ENCODE measurements at regions of chr12 and their contacts with region 1.

Region 1: DNA sequence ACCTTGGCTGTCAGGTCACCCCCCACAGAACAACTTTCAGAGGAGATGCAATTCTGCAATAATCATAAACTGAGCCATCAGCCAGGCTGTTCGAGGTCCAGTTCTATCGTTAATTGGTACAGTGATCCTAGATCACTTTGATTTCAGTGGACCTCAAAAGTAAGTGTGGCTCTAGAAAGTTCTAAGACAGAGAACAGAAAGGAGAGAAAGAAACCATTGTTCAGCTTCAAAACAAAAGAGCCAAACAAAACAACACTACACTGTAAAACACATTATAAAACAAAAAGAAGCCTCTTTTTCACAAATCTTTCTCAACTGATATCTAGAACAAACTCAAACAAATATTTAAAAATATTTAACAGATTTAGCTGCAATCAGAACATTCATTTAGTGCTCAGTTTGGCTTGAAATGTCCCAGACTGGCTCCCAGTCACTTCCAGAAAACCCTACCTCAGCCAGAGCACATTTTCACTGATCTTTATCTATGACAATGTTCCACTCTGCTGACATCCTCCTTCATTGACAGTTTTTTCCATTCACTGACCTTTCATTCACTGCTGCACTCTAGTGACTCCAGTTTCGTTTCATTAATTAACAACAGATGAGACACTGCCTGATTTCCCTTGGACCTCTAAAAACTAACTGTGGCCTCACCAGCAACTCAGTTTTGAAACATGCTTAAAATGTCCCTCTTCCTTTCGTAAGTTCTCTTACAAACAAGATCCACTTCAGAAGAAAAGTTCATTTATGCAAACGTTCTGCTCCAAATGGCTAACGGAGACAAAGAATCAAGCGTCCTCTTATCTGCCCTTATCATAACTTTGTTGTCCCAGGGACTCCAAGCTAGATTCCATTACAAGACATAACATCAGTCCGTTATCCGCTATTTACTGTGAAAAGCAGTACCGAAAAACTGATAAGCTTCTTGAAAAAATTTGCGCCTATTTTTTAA is 56.8 kb downstream of the DUSP16 start:
- DNase-seq: no peak
- H3K4me3 ChIP-seq: no peak overlapping the region
- H3K27ac ChIP-seq: peak overlapping the region; percentile 52
- H3K4me1 ChIP-seq: no peaks in the 10 kb centered on the region
- H3K27me3 ChIP-seq: no peaks in the 10 kb centered on the region
- CTCF ChIP-seq: no peak

Region 2: GRCh38 chr12:12081836-12082497 is 423.9 kb before region 1 on chr12:
- intact Hi-C with region 1: no loop called
- DNase-seq: peak; percentile 81
- H3K4me3 ChIP-seq: no peak overlapping the region
- H3K27ac ChIP-seq: peak overlapping the region; percentile 21
- H3K4me1 ChIP-seq: no peaks in the 10 kb centered on the region
- H3K27me3 ChIP-seq: no peaks in the 10 kb centered on the region
- CTCF ChIP-seq: no peak

Region 3: DNA sequence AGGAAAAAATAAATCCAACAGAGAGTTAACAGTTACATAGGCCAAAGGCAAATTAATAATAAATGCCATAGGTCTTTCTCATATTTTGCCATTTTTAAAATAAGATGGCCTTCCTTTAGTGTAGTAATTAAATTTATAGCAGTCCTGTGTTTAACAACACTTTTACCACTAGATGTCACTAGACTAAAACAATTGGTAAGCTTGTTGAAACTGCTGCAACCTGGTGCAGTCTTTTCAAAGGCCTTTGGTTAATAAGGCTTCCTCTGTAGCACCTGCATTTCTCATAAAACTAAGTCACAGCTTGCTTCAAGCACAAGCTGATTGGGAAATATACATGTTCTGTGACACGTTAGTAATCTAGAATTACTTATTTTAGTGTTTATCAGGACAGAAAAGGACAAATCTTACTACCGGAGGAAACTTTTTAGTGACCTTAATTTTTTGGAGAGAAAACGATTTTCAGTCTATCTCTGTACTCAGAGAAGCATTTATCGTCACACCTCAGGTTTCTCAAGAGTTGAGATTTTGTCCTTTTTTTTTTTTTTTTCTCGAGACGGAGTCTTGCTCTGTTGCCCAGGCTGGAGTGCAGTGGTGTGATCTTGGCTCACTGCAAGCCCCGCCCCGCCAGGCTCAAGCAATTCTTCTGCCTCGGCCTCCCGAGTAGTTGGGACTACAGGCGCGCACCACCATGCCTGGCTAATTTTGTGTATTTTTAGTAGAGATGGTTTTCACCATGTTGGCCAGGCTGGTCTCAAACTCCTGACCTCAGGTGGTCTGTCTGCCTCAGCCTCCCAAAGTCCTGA is 129.0 kb before region 1 on chr12:
- intact Hi-C with region 1: no loop called
- DNase-seq: no peak
- H3K4me3 ChIP-seq: no peak overlapping the region
- H3K27ac ChIP-seq: no peak overlapping the region
- H3K4me1 ChIP-seq: peaks cover 6% of the 10 kb centered on the region
- H3K27me3 ChIP-seq: no peaks in the 10 kb centered on the region
- CTCF ChIP-seq: peak; percentile 72

Region 4: DNA sequence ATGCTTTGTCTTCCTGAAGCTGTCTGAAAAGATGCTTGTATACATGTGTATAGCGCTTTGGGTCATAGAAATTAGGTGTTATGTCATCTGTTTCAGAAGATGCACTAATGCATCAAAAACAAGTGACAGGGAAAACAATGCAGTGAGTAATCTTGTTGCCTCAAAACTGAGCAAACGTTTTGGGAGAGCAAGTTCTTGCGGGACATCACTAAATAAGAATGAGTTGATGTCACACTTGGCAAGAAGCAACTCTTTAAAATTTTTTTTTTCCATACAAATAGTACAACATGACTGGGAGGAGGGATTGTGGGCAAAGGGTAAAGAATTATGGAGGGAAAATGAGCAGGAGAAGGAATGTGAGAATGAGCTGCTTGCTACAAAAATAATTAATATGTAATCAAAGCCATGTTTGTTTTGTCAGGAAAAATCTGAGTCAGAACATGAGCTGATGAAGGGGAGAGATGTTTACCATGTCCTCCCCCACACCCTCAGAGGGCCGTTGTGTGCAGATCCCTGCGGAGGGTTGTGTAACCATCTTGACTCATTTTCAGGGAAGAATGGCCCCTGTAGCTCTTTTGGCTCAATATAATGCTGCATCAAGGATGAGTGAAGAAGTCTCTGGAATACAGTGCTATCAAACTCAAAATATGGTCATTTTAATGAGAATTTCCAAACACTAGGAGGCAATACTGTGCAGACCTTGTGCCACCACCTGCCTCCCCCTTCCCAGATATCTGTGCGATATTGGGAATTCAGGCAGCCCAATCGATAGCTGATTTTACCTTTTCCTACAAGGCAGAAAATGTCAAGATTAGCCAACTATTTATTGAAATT is 107.6 kb before region 1 on chr12:
- intact Hi-C with region 1: loop called (anchors 10 kb)
- DNase-seq: no peak
- H3K4me3 ChIP-seq: no peak overlapping the region
- H3K27ac ChIP-seq: peak overlapping the region; percentile 26
- H3K4me1 ChIP-seq: no peaks in the 10 kb centered on the region
- H3K27me3 ChIP-seq: no peaks in the 10 kb centered on the region
- CTCF ChIP-seq: no peak

Region 5: GRCh38 chr12:12628013-12628412 is 122.2 kb after region 1 on chr12:
- intact Hi-C with region 1: no loop called
- DNase-seq: no peak
- H3K4me3 ChIP-seq: no peak overlapping the region
- H3K27ac ChIP-seq: no peak overlapping the region
- H3K4me1 ChIP-seq: no peaks in the 10 kb centered on the region
- H3K27me3 ChIP-seq: no peaks in the 10 kb centered on the region
- CTCF ChIP-seq: no peak

Region 6: GRCh38 chr12:12654691-12655460 is 149.1 kb after region 1 on chr12:
- intact Hi-C with region 1: loop called (anchors 10 kb)
- DNase-seq: no peak
- H3K4me3 ChIP-seq: no peak overlapping the region
- H3K27ac ChIP-seq: no peak overlapping the region
- H3K4me1 ChIP-seq: no peaks in the 10 kb centered on the region
- H3K27me3 ChIP-seq: no peaks in the 10 kb centered on the region
- CTCF ChIP-seq: no peak

Region 7: GRCh38 chr12:12673296-12673695 is 167.5 kb after region 1 on chr12:
- intact Hi-C with region 1: no loop called
- DNase-seq: no peak
- H3K4me3 ChIP-seq: no peak overlapping the region
- H3K27ac ChIP-seq: no peak overlapping the region
- H3K4me1 ChIP-seq: no peaks in the 10 kb centered on the region
- H3K27me3 ChIP-seq: no peaks in the 10 kb centered on the region
- CTCF ChIP-seq: no peak